ENCODE measurements at regions of chr5 and their contacts with region 1.

Region 1: DNA sequence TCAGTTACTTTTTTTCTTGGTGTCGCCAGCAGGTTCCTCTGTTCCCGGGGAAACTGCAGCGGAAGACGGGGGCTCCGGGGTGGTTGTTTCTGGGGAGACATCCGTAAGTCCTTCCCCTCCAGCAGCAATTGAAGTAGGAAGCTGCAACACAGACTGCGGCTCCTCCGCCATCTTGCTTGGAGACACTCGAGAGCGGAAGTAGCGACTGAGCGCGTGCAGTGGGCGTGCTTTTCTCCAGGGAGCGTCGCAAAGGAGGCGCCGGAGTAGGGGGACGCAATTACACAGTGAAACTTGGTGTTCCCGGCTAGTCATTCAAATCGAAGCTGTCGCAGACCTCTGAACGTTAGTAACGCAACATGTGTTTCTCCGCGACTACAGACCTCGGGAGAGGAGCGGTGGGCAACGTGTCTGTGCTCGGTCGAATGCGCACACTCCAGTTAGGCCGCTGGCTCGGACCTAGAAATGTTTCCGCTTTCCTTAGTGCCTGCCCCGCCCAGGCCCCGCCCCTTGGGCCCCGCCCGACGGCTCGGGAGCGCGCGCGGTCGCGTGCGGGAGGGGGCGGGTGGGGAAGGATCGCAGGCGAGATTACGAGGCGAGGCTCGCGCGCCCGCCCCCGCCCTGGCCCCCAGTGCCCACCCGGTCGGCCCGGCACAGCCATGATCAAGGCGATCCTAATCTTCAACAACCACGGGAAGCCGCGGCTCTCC is at the starts of genes AP3S1 and ATG12:
- DNase-seq: peak; percentile 92 to 95 (median 94)
- H3K4me3 ChIP-seq: peak within 1 kb of the TSS; percentile 79 to 91
- H3K4me3 Mint-ChIP-seq: peak within 1 kb of the TSS; percentile 97 to 99 (median 99)
- H3K27ac ChIP-seq: peak within 1 kb of the TSS; percentile 93
- H3K27ac Mint-ChIP-seq: peak within 1 kb of the TSS; percentile 99 to 100 (median 100)
- H3K4me1 ChIP-seq: peaks cover 55% of the 10 kb centered on the region
- H3K4me1 Mint-ChIP-seq: peaks cover 33 to 74% (median 52%) of the 10 kb centered on the region in 4 donors
- H3K27me3 ChIP-seq: no peaks in the 10 kb centered on the region
- H3K27me3 Mint-ChIP-seq: no peaks in the 10 kb centered on the region
- total RNA-seq, gene AP3S1: 44.5 to 46.3 TPM
- total RNA-seq, gene ATG12: 84.7 to 85.9 TPM

Region 2: DNA sequence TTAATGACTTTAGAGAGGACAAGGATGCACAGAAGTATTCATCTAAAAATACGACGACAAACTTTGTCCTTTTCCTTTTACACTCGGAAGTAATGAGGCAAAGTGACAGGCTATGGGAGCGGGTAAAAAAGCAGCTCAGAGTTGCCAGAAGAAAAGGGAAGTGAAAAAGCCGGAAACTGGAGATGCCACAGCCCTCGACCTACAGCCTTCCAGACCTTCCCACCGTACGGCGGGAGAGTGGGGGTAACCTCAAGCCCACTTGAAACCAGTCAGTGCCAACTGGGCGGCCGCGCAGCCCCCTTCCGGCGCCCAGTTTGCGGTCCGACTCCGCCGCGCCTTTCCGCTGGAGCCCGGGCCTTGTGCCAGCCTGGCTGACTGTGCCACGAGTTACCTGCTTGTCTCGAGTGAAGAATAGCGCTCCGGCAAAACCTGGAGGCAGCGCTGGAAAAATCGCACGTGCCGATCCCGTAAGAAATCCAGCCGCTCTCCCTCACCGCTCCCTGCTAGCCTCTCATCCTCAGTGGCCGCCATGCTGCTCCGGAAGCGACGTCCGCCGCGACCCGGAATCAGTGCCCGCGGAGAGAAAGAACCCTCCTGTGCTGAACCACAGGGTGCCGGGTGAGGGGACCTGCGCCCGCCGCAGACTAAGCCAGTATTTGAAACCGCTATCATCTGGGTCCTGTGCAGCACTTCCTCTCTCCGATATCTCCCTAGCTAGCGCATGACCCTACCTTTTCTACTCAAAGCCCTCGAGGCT is 579.0 kb before region 1 on chr5 and contains the start of gene PGGT1B:
- CTCF ChIA-PET with region 1: interaction called, 3 read pairs
- POLR2A ChIA-PET with region 1: no interaction called
- intact Hi-C with region 1: loop called (anchors 1 kb)
- DNase-seq: peak; percentile 59 to 67 (median 66)
- H3K4me3 ChIP-seq: peak within 1 kb of the TSS; percentile 55 to 80
- H3K4me3 Mint-ChIP-seq: peak within 1 kb of the TSS; percentile 87 to 98 (median 98)
- H3K27ac ChIP-seq: peak within 1 kb of the TSS; percentile 77
- H3K27ac Mint-ChIP-seq: peak within 1 kb of the TSS; percentile 85 to 98 (median 95)
- H3K4me1 ChIP-seq: peaks cover 45% of the 10 kb centered on the region
- H3K4me1 Mint-ChIP-seq: peaks cover 37 to 52% (median 44%) of the 10 kb centered on the region in 4 donors
- H3K27me3 ChIP-seq: no peaks in the 10 kb centered on the region
- H3K27me3 Mint-ChIP-seq: no peaks in the 10 kb centered on the region
- total RNA-seq, gene PGGT1B: 40.6 to 42.4 TPM

Region 3: DNA sequence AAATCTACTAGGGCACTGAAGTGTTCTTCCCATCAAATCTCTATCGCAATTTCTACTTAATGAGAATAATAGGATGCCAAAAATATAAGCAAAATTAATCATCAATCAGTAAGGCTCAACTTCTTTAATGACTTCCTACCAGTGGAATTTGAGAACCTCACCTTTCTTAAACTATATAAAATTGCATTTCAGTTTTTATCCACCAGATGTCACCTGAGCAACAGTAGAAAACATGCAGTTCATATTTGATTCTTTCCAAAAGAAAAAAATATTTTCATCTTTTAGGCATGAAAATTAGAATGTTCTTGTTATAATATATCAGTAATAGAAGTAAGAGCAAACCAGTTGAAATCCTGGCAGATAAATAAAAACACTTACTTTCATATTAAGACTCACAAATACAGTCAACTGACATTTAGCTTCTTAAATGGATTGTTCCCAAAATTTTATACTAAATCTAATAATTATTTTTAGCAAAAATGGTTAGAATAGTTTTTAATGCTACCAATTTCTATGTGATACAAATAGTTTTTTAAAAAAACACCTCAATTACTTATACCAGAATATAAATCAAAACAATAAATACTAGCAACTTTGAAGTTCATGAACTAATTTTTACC is 531.7 kb before region 1 on chr5:
- CTCF ChIA-PET with region 1: interaction called, 4 read pairs
- POLR2A ChIA-PET with region 1: no interaction called
- intact Hi-C with region 1: loop called (anchors 1 kb)
- DNase-seq: peak in 4 of 5 donors; percentile 41 to 55 (median 51)
- H3K4me3 ChIP-seq: no peak overlapping the region
- H3K4me3 Mint-ChIP-seq: no peak overlapping the region
- H3K27ac ChIP-seq: no peak overlapping the region
- H3K27ac Mint-ChIP-seq: no peak overlapping the region
- H3K4me1 ChIP-seq: no peaks in the 10 kb centered on the region
- H3K4me1 Mint-ChIP-seq: no peaks in the 10 kb centered on the region
- H3K27me3 ChIP-seq: peaks cover 3% of the 10 kb centered on the region
- H3K27me3 Mint-ChIP-seq: peaks cover 15 to 28% of the 10 kb centered on the region in 2 donors

Region 4: DNA sequence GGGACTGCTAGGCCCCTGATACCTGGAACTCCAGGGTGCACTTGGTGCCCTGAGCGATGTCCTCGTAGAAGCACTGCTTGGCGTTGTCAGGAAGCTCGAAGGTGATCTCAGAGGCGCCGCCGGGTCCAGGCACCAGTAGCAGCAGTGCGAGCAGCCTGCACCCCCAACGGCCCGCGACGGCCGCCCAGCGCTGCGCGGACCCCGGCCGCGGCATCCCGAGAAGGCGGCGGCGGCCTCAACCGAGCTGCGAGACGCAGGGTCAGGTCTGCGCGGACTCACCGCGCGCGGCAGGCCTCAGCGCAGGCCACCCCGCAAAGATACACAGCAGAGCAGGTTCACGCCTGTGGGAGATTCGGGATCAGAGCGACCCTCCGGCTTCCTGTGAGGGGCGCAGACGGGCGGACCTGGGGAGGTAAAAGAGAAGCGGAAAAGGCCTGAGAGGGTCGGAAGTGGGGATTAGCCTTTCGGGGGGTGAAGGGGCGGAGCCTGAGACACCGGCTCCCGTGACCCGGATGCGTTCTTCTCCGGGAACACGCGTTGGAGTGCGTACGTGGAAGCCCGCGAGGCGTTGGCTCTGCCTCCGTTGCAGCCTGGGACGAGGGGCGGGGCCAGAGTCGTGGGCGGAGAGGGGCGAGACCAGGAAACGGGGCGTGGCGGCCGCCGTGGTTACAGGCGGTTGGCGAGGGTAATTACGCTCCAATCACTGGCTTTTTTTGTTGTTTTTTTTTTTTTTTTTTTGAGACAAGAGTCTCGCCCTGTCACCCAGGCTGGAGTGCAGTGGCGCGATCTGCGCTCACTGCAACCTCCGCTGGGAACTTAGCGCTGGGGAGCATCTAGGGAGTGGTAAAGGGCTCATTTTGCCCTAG is 215.7 kb before region 1 on chr5 and contains the start of gene TMED7:
- CTCF ChIA-PET with region 1: interaction called, 9 read pairs
- POLR2A ChIA-PET with region 1: interaction called, 59 read pairs
- intact Hi-C with region 1: loop called (anchors 1 kb)
- DNase-seq: peak; percentile 99
- H3K4me3 ChIP-seq: peak within 1 kb of the TSS; percentile 79 to 86
- H3K4me3 Mint-ChIP-seq: peak within 1 kb of the TSS in 2 of 8 donors; percentile 97 to 98
- H3K27ac ChIP-seq: peak within 1 kb of the TSS; percentile 93
- H3K27ac Mint-ChIP-seq: peak within 1 kb of the TSS in 4 of 7 donors; percentile 95 to 98 (median 98)
- H3K4me1 ChIP-seq: peaks cover 42% of the 10 kb centered on the region
- H3K4me1 Mint-ChIP-seq: peaks cover 18 to 19% (median 19%) of the 10 kb centered on the region in 4 donors
- H3K27me3 ChIP-seq: no peaks in the 10 kb centered on the region
- H3K27me3 Mint-ChIP-seq: no peaks in the 10 kb centered on the region
- total RNA-seq, gene TMED7: 47.5 to 49.5 TPM

Region 5: GRCh38 chr5:115831163-115831768 is 10.3 kb before region 1 on chr5:
- CTCF ChIA-PET with region 1: interaction called, 5 read pairs
- POLR2A ChIA-PET with region 1: interaction called, 5 read pairs
- intact Hi-C with region 1: loop called (anchors 1 kb)
- DNase-seq: peak in 4 of 5 donors; percentile 30 to 48 (median 38)
- H3K4me3 ChIP-seq: no peak overlapping the region
- H3K4me3 Mint-ChIP-seq: no peak overlapping the region
- H3K27ac ChIP-seq: no peak overlapping the region
- H3K27ac Mint-ChIP-seq: peak overlapping the region in 5 of 7 donors; percentile 2 to 61 (median 29)
- H3K4me1 ChIP-seq: no peaks in the 10 kb centered on the region
- H3K4me1 Mint-ChIP-seq: peaks cover 5 to 12% (median 10%) of the 10 kb centered on the region in 4 donors
- H3K27me3 ChIP-seq: no peaks in the 10 kb centered on the region
- H3K27me3 Mint-ChIP-seq: no peaks in the 10 kb centered on the region

Region 6: DNA sequence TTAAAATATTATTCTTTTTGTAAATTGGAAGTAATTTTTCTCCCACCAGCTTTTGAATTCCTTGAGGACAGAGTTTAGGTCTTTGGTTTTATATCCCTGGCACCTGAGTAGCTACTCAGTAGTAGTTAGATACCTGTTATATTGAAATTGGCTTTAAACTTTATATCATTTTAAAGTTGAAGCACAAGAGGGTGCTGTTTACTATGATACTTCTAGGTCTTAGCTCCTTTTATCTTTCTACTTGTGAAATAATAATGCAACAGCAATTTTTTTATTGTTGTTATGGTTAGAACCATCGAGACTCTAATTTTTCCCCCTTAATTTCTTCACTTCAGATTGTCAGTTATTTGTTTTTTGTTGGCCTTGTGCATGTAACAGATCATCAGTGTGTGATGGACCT is 46.5 kb after region 1 on chr5:
- CTCF ChIA-PET with region 1: no interaction called
- POLR2A ChIA-PET with region 1: no interaction called
- intact Hi-C with region 1: no loop called
- DNase-seq: no peak
- H3K4me3 ChIP-seq: no peak overlapping the region
- H3K4me3 Mint-ChIP-seq: no peak overlapping the region
- H3K27ac ChIP-seq: no peak overlapping the region
- H3K27ac Mint-ChIP-seq: no peak overlapping the region
- H3K4me1 ChIP-seq: no peaks in the 10 kb centered on the region
- H3K4me1 Mint-ChIP-seq: no peaks in the 10 kb centered on the region
- H3K27me3 ChIP-seq: no peaks in the 10 kb centered on the region
- H3K27me3 Mint-ChIP-seq: no peaks in the 10 kb centered on the region

Region 7: DNA sequence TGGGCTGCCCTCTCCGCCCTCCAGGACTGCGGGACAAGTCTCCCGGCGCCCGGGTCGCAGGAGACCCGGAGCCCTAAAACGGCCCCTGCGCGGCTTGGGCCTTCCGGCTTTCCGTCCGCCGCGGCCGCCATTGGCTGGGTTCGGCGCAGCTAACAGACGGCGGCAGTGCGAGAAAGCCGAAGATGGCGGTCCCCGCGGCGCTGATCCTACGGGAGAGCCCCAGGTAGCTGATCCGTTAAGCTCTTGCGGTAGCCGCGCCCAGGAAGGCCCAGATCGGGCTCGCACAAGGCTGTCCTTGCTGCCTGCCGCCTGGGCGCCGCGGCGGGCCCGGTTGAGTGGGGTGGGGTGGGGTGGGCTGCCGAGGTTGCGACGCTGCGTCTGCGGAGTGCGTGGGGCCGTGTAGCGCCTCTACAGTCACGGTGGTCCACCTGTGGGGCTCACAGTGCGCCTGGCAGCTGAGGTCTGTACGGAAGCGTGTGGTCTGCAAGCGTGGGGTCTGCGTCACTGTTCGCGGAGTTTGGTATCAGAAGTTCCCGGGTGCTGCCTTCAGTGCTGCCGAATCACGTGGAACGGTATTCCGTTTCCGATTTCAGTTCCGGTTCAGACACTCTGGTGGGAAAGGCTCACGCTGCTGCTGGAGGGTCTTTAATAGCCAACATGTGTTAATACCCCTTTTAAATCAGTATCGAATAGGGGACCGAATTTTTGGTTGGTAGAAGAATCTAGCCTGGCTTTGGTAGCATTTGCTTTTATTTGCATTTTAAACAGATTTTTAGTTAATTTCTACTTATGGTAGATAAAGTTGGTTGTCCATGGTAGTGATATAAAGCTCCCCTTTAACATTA is 243.6 kb after region 1 on chr5 and contains the start of gene COMMD10:
- CTCF ChIA-PET with region 1: no interaction called
- POLR2A ChIA-PET with region 1: interaction called, 9 read pairs
- intact Hi-C with region 1: loop called (anchors 1 kb)
- DNase-seq: peak; percentile 79 to 88 (median 83)
- H3K4me3 ChIP-seq: peak within 1 kb of the TSS; percentile 76 to 96
- H3K4me3 Mint-ChIP-seq: peak within 1 kb of the TSS; percentile 92 to 96 (median 96)
- H3K27ac ChIP-seq: peak within 1 kb of the TSS; percentile 78
- H3K27ac Mint-ChIP-seq: peak within 1 kb of the TSS; percentile 92 to 99 (median 98)
- H3K4me1 ChIP-seq: peaks cover 33% of the 10 kb centered on the region
- H3K4me1 Mint-ChIP-seq: peaks cover 31 to 65% (median 43%) of the 10 kb centered on the region in 4 donors
- H3K27me3 ChIP-seq: no peaks in the 10 kb centered on the region
- H3K27me3 Mint-ChIP-seq: no peaks in the 10 kb centered on the region
- total RNA-seq, gene COMMD10: 31.4 to 32.0 TPM